HCT116 (cell line): ENCODE measurements at regions of chr10 and their contacts with region 1.

Region 1: DNA sequence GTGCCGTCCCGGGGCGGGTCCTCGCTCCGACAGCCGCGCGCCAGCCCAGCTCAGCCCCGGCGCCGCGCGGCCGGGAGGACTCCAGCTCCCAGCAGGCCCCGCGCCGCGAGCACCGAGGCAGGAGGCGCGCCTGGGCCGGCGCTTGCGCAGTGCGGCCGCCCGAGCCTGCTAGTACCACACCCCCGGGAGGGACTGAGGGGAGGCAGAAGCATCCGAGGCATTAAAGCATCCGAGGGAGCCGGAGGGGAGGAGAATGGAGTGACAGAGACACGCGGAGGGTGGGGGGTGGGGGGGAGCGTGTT is at the start of gene GRK5:
- DNase-seq: peak; percentile 93
- ATAC-seq: peak; percentile 86
- H3K4me3 ChIP-seq: peak within 1 kb of the TSS; percentile 48 to 69
- H3K27ac ChIP-seq: peak within 1 kb of the TSS; percentile 84
- H3K4me1 ChIP-seq: peaks cover 20 to 36% of the 10 kb centered on the region in 2 experiments; a peak in 3 of 4 replicates
- H3K27me3 ChIP-seq: no peaks in the 10 kb centered on the region
- CTCF ChIP-seq: no peak
- POLR2A ChIP-seq: peak; percentile 36
- RAD21 ChIP-seq: no peak
- total RNA-seq, gene GRK5: 7.3 TPM

Region 2: DNA sequence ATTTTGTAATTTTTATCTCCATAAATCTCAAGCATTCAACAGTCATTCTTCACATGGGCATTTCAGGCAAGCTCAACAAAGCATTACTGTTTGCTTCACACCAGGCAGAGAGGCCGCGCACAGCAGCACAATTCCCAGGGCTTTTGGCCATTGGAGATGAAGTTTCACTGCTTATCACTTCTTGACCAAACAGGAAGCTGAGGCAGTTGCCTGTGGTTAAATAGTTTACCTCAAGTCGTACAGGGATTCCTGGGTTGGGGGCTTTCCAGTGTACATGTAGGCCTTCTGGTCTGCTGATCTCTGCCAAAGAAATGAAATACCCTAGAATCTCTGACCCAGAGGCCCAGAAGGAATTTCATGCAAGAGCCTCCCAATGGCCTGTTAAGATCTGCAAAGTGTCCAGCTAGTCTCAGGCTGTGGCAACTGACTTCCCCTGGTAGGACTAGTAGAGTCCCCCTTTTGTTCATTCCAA is 17.5 kb before region 1 on chr10:
- CTCF ChIA-PET with region 1: interaction called, 15 read pairs
- POLR2A ChIA-PET with region 1: interaction called, 3 read pairs
- RAD21 ChIA-PET with region 1: no interaction called
- intact Hi-C with region 1: no loop called
- DNase-seq: no peak
- ATAC-seq: peak; percentile 28
- H3K4me3 ChIP-seq: no peak overlapping the region
- H3K27ac ChIP-seq: no peak overlapping the region
- H3K4me1 ChIP-seq: peaks cover 3 to 27% of the 10 kb centered on the region in 2 experiments; a peak in 3 of 4 replicates
- H3K27me3 ChIP-seq: no peaks in the 10 kb centered on the region
- CTCF ChIP-seq: no peak
- POLR2A ChIP-seq: no peak
- RAD21 ChIP-seq: no peak

Region 3: GRCh38 chr10:119270762-119271366 is 63.5 kb after region 1 on chr10:
- CTCF ChIA-PET with region 1: interaction called, 13 read pairs
- POLR2A ChIA-PET with region 1: interaction called, 10 read pairs
- RAD21 ChIA-PET with region 1: interaction called, 3 to 12 read pairs
- intact Hi-C with region 1: loop called (anchors 2 kb)
- DNase-seq: peak; percentile 41
- ATAC-seq: peak; percentile 81
- H3K4me3 ChIP-seq: peak overlapping the region; percentile 28 to 48
- H3K27ac ChIP-seq: peak overlapping the region; percentile 81
- H3K4me1 ChIP-seq: peaks cover 47 to 72% of the 10 kb centered on the region in 2 experiments
- H3K27me3 ChIP-seq: no peaks in the 10 kb centered on the region
- CTCF ChIP-seq: no peak
- POLR2A ChIP-seq: peak; percentile 58
- RAD21 ChIP-seq: no peak

Region 4: GRCh38 chr10:119416855-119417254 is 209.5 kb after region 1 on chr10:
- CTCF ChIA-PET with region 1: interaction called, 37 read pairs
- POLR2A ChIA-PET with region 1: interaction called, 4 read pairs
- RAD21 ChIA-PET with region 1: interaction called, 3 to 5 read pairs
- intact Hi-C with region 1: loop called (anchors 1 kb)
- DNase-seq: peak; percentile 58
- ATAC-seq: peak; percentile 96
- H3K4me3 ChIP-seq: no peak overlapping the region
- H3K27ac ChIP-seq: no peak overlapping the region
- H3K4me1 ChIP-seq: peaks cover 0 to 3% of the 10 kb centered on the region in 2 experiments; a peak in 1 of 4 replicates
- H3K27me3 ChIP-seq: no peaks in the 10 kb centered on the region
- CTCF ChIP-seq: peak; percentile 96 to 98 (median 97)
- POLR2A ChIP-seq: no peak
- RAD21 ChIP-seq: peak; percentile 100

Region 5: GRCh38 chr10:119489991-119490326 is 282.6 kb after region 1 on chr10:
- CTCF ChIA-PET with region 1: interaction called, 13 read pairs
- POLR2A ChIA-PET with region 1: no interaction called
- RAD21 ChIA-PET with region 1: interaction called, 3 to 4 read pairs
- intact Hi-C with region 1: no loop called
- DNase-seq: no peak
- ATAC-seq: peak; percentile 9; the same call in 1 of the 2 replicates
- H3K4me3 ChIP-seq: peak overlapping the region in 1 of 2 experiments; percentile 56; a peak in 2 of 4 replicates
- H3K27ac ChIP-seq: no peak overlapping the region
- H3K4me1 ChIP-seq: peaks cover 0 to 10% of the 10 kb centered on the region in 2 experiments; a peak in 3 of 4 replicates
- H3K27me3 ChIP-seq: no peaks in the 10 kb centered on the region
- CTCF ChIP-seq: no peak
- POLR2A ChIP-seq: no peak
- RAD21 ChIP-seq: no peak